ENCODE measurements at regions of chr10 and their contacts with region 1.

Region 1: GRCh38 chr10:23850631-23851030 is 358.3 kb upstream of the KIAA1217 start:
- DNase-seq: no peak
- H3K4me3 ChIP-seq: no peak overlapping the region
- H3K27ac ChIP-seq: no peak overlapping the region
- H3K4me1 ChIP-seq: no peaks in the 10 kb centered on the region
- CTCF ChIP-seq: no peak

Region 2: DNA sequence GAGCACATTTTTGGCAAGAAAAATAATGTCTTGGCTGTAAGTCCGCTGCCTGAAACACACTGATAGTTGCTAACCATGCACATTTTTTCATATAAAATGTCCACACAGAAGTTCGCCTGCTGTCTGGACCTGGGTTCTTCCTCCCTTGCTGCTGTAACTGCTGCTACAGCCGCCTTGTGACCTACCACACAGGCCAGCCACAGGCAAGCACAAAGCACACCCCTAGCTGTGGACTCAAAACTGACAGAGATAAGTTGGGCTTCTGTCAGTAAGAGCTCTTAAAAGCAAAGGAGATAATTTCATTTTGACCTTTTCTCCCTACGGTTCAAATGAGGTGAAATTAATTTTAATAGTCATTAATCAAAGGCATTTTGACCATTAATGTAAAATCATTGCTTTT is 57.1 kb before region 1 on chr10:
- CTCF ChIA-PET with region 1: no interaction called
- POLR2A ChIA-PET with region 1: no interaction called
- intact Hi-C with region 1: no loop called
- DNase-seq: no peak
- H3K4me3 ChIP-seq: no peak overlapping the region
- H3K27ac ChIP-seq: no peak overlapping the region
- H3K4me1 ChIP-seq: no peaks in the 10 kb centered on the region
- CTCF ChIP-seq: no peak

Region 3: DNA sequence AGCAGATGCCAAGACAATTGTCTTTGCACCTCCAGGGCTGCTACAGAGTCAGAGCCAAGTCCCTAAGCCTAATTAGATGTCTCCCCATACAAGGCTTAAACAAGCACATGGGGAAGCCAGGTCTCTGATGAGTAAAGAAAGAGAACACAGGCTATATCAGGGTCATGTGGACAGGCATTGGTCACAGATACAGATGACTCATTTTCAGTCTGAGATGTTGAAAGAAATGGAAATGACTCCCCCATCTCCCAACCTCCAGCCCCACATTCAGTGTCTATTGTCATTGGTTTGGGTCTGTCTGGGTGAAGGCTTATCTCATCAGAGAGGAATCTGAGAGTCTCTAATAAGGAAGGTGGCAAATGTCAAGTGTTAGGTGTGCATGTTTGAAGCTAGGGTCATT is 68.2 kb after region 1 on chr10:
- CTCF ChIA-PET with region 1: no interaction called
- POLR2A ChIA-PET with region 1: interaction called, 10 read pairs
- intact Hi-C with region 1: no loop called
- DNase-seq: no peak
- H3K4me3 ChIP-seq: no peak overlapping the region
- H3K27ac ChIP-seq: no peak overlapping the region
- H3K4me1 ChIP-seq: no peaks in the 10 kb centered on the region
- CTCF ChIP-seq: no peak

Measured in OCI-LY7 (cell line).